Lower leg skin (tissue), 4 donors: ENCODE measurements at regions of chr2 and their contacts with region 1.

Region 1: DNA sequence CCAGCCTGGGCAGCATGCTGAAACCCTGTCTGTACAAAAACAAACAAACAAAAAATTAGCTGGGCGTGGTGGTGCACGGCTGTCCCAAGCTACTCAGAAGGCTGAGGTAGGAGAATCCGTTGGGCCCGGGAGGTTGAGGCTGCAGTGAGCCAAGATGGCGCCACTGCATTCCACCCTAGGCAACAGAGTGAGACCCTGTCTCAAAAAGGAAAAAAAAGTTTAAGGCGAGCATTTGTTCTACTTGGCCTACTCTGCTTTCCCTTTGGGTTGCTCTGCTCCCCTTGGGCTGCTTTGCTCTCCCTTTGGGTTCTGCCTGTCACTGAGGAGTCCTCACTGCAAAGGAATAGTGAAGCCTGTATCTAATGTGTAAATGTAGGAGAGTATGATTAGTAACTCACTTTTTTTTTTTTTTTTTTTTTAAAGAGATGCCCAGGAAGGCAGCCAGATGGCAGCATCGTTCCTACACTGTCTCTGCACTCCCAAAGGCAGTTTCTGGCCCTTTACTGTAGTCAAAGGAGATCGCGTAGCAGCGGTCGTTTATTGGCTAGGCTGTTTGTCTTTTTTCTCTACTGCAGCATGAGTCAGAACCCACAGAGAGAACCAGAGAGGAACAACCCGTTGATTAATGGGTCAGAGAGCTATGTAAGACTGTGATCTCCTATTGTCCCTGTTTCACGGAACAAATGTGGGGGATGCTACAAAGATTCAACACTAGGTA is 118.3 kb upstream of the CWC22 start:
- DNase-seq: peak; percentile 36 to 87
- H3K4me3 ChIP-seq: no peak overlapping the region
- CTCF ChIP-seq: no peak
- POLR2A ChIP-seq: no peak

Region 2: GRCh38 chr2:180143633-180144337 is 18.4 kb after region 1 on chr2:
- intact Hi-C with region 1: no loop called
- DNase-seq: no peak
- H3K4me3 ChIP-seq: no peak overlapping the region
- CTCF ChIP-seq: no peak
- POLR2A ChIP-seq: no peak

Region 3: GRCh38 chr2:181697571-181697970 is 1572.2 kb after region 1 on chr2:
- intact Hi-C with region 1: loop called (anchors 10 kb)
- DNase-seq: no peak
- H3K4me3 ChIP-seq: no peak overlapping the region
- CTCF ChIP-seq: no peak
- POLR2A ChIP-seq: no peak